CD8-positive, alpha-beta T cell (primary cell): ENCODE measurements at regions of chr10 and their contacts with region 1.

Region 1: GRCh38 chr10:110414563-110415309 is 83.0 kb upstream of the DUSP5 start:
- DNase-seq: peak; percentile 66 to 97 (median 86)
- ATAC-seq: peak; percentile 95
- H3K4me3 ChIP-seq: no peak overlapping the region
- H3K4me3 Mint-ChIP-seq: peak overlapping the region; percentile 33
- H3K27ac ChIP-seq: peak overlapping the region in 1 of 2 experiments; percentile 38
- H3K27ac Mint-ChIP-seq: peak overlapping the region; percentile 82
- H3K4me1 ChIP-seq: peaks cover 26% of the 10 kb centered on the region
- H3K4me1 Mint-ChIP-seq: peaks cover 29% of the 10 kb centered on the region
- H3K27me3 ChIP-seq: no peaks in the 10 kb centered on the region
- H3K27me3 Mint-ChIP-seq: peaks cover 2% of the 10 kb centered on the region
- CTCF ChIP-seq: no peak

Region 2: DNA sequence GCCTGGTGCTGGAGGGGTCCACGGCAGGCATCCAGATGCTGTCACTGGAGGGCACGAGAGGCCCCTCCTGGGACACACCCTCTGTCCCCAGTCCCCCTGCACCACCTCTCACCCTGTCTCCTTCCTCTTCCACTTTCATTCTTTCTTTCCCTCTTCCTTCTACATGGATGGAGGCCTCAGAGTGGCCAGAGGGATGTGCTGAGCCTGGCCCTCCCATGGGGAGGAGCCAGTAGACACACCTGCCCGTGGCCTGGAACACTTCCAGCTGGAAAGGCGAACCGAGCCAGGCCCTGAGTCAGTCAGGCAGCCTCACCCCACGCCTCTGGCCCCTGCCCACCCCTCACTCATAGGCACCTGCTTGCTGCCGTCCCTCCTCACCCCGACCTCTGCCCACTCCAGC is 263.3 kb before region 1 on chr10:
- CTCF ChIA-PET with region 1: no interaction called
- POLR2A ChIA-PET with region 1: no interaction called
- intact Hi-C with region 1: loop called in 1 of 2 experiments (anchors 10 kb)
- DNase-seq: peak in 1 of 9 experiments; percentile 44
- ATAC-seq: no peak
- H3K4me3 ChIP-seq: no peak overlapping the region
- H3K4me3 Mint-ChIP-seq: no peak overlapping the region
- H3K27ac ChIP-seq: no peak overlapping the region
- H3K27ac Mint-ChIP-seq: no peak overlapping the region
- H3K4me1 ChIP-seq: peaks cover 7% of the 10 kb centered on the region
- H3K4me1 Mint-ChIP-seq: peaks cover 8% of the 10 kb centered on the region
- H3K27me3 ChIP-seq: peaks cover 41 to 51% of the 10 kb centered on the region in 2 experiments
- H3K27me3 Mint-ChIP-seq: peaks cover 74% of the 10 kb centered on the region
- CTCF ChIP-seq: no peak

Region 3: DNA sequence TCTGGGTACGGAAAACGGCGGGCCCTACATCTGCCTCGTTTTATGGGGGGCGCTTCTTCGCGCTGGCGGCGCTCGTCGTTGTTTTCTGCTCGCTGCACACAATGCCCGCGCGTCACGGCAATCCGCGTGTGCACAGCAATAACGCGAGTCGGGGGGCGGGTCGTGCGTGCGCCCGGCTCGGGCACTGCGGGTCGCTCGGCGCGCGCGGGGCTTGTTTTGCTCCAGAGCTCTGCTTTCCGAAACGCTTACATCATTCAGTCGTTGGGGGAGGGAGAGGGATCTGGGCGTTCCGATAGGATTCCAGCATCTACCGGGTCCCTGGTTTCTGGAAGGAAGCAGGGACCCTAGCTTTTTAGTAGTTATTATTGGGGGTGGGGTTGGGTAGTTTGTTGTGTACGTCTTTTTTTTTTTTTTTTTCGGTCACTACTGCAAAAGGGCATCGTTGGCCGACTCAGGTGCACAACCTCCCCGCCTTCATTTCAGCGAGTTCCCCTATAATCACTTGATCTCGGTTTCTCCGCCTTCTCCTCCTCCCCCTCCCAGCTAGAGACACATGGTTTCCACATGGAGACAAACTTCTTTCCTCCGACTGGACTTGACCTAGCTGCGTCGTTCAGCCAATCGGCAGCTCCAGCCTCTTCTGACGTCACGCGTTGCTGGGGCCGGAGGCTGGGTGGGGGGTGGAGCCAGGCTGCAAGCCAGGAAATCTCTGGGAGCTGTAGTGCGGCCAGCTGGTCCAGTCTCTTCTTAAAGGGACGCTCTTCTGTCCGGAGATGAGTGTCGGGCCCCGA is 203.9 kb before region 1 on chr10:
- CTCF ChIA-PET with region 1: no interaction called
- POLR2A ChIA-PET with region 1: no interaction called
- intact Hi-C with region 1: loop called in 1 of 2 experiments (anchors 5 kb)
- DNase-seq: peak; percentile 77 to 94 (median 90)
- ATAC-seq: peak; percentile 48
- H3K4me3 ChIP-seq: peak overlapping the region; percentile 59 to 91
- H3K4me3 Mint-ChIP-seq: peak overlapping the region; percentile 94
- H3K27ac ChIP-seq: peak overlapping the region; percentile 60 to 90
- H3K27ac Mint-ChIP-seq: peak overlapping the region; percentile 99
- H3K4me1 ChIP-seq: peaks cover 22% of the 10 kb centered on the region
- H3K4me1 Mint-ChIP-seq: peaks cover 47% of the 10 kb centered on the region
- H3K27me3 ChIP-seq: peaks cover 0 to 13% of the 10 kb centered on the region in 2 experiments
- H3K27me3 Mint-ChIP-seq: peaks cover 17% of the 10 kb centered on the region
- CTCF ChIP-seq: no peak

Region 4: GRCh38 chr10:110354322-110354766 is 60.4 kb before region 1 on chr10:
- CTCF ChIA-PET with region 1: interaction called, 3 read pairs
- POLR2A ChIA-PET with region 1: interaction called, 3 read pairs
- intact Hi-C with region 1: loop called (anchors 1 to 2 kb)
- DNase-seq: peak; percentile 54 to 84 (median 75)
- ATAC-seq: no peak
- H3K4me3 ChIP-seq: no peak overlapping the region
- H3K4me3 Mint-ChIP-seq: no peak overlapping the region
- H3K27ac ChIP-seq: no peak overlapping the region
- H3K27ac Mint-ChIP-seq: no peak overlapping the region
- H3K4me1 ChIP-seq: peaks cover 9% of the 10 kb centered on the region
- H3K4me1 Mint-ChIP-seq: peaks cover 48% of the 10 kb centered on the region
- H3K27me3 ChIP-seq: no peaks in the 10 kb centered on the region
- H3K27me3 Mint-ChIP-seq: no peaks in the 10 kb centered on the region
- CTCF ChIP-seq: peak; percentile 63

Region 5: DNA sequence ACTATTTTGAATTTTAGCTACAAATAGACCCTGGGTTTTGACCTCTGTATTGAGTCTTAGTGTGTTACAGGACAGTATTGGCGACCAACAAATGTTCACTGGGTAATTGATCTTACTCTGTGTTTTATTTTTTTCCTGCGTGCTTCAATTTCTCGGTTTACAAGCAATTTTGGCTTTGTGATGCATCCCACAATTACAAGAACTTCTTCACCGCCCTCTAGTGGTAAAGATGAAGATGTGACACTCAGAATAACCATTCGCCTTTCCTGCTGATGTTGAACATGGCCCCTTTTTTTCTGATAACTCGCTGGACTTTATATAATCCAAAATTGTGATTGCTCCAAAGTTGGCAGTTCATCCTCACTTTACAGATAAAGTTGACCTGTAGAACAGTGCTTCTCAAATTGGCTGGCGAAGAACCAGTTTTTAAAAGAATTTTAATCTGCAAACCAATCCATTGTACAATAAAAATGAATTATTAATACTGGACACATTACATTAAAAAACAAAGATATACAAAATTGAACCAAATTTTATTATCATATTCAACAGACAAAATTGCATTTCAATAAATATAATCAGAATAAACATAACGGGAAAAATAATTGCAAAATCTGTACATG is 132.5 kb after region 1 on chr10:
- CTCF ChIA-PET with region 1: interaction called, 5 read pairs
- POLR2A ChIA-PET with region 1: no interaction called
- intact Hi-C with region 1: loop called in 1 of 2 experiments (anchors 5 kb)
- DNase-seq: peak in 2 of 9 experiments; percentile 66 to 79
- ATAC-seq: peak; percentile 88
- H3K4me3 ChIP-seq: no peak overlapping the region
- H3K4me3 Mint-ChIP-seq: no peak overlapping the region
- H3K27ac ChIP-seq: no peak overlapping the region
- H3K27ac Mint-ChIP-seq: no peak overlapping the region
- H3K4me1 ChIP-seq: no peaks in the 10 kb centered on the region
- H3K4me1 Mint-ChIP-seq: peaks cover 4% of the 10 kb centered on the region
- H3K27me3 ChIP-seq: no peaks in the 10 kb centered on the region
- H3K27me3 Mint-ChIP-seq: peaks cover 16% of the 10 kb centered on the region
- CTCF ChIP-seq: peak; percentile 92